ENCODE measurements at regions of chr7 and their contacts with region 1.

Region 1: DNA sequence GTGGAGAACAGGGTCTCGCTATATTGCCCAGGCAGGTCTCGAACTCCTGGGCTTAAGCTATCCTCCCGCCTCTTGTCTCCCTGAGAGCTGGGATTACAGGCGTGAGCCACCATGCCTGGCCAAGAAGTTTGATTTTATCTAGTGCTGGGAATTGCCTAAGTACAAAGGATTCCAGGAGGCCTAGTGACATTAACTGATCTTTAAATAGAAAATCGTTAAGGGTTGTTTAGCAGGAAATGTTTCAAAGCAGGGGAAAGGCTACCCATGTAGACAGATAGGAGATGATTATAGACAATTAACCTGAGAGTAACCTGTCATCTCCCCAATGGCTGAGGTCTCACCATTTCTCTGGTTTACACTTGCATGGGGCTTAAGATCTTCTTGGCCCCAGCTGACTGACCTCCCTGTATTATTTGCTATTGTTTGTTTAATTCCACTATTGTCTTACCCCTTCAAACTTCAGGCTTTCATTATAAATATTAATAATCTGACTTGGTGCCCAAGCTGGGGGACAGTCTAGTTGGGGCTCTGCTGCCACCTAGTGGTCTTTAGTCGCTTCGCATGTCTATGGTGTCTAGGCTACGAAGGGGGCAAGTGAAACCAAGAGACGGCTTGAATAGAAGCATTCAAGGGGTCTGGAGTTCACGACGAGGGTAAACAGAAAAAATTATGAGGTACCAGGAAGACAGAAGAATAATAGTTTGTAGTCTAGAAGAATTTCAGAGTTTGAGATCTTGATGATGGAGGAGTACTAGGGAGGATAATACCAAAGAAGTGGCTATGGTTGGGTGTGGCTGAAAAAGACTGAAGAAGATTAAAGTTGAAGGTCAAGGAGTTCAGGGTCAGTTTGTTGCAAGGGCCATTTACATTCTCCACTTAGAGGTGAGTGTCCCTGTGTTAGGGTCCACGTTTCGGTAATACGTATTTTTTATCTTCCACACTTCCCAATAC is 40.4 kb upstream of the BPGM start:
- DNase-seq: peak in 1 of 2 donors; percentile 62
- H3K4me3 ChIP-seq: no peak overlapping the region
- H3K27ac ChIP-seq: no peak overlapping the region
- H3K4me1 ChIP-seq: peaks cover 0 to 3% (median 0%) of the 10 kb centered on the region in 4 donors
- H3K27me3 ChIP-seq: no peaks in the 10 kb centered on the region
- CTCF ChIP-seq: peak; percentile 77 to 95

Region 2: GRCh38 chr7:134432296-134433152 is 173.7 kb before region 1 on chr7:
- intact Hi-C with region 1: loop called (anchors 5 kb)
- DNase-seq: peak; percentile 86 to 88
- H3K4me3 ChIP-seq: peak overlapping the region; percentile 34 to 50
- H3K27ac ChIP-seq: peak overlapping the region; percentile 62 to 67
- H3K4me1 ChIP-seq: peaks cover 0 to 13% (median 2%) of the 10 kb centered on the region in 4 donors
- H3K27me3 ChIP-seq: no peaks in the 10 kb centered on the region
- CTCF ChIP-seq: peak; percentile 68 to 93

Region 3: DNA sequence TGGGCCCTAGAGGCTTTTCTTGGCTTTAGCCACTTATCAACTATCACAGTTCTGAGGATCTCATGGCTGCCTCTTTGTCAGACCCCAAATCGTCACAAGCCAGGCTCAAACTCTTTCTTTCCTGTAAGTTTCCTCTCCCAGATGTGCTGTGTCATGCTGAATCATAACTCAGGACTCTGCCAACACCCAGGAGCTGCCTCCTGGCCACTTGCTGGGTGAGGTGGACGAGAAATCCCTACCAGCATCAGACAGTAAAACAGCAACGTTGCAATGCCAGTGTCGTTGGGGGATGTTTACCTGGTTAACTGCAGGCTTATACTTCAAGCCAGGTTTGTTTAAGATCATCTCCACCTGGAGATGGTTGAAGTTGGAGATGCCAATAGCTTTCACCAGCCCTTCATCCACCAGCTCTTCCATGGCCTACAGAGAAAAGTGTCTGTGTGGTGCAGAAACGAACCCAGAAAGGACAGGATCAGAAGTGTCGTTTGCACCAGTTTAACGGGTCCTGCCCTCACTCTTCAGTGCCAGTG is 157.5 kb before region 1 on chr7:
- intact Hi-C with region 1: loop called (anchors 5 kb)
- DNase-seq: no peak
- H3K4me3 ChIP-seq: no peak overlapping the region
- H3K27ac ChIP-seq: no peak overlapping the region
- H3K4me1 ChIP-seq: no peaks in the 10 kb centered on the region
- H3K27me3 ChIP-seq: no peaks in the 10 kb centered on the region
- CTCF ChIP-seq: no peak

Region 4: DNA sequence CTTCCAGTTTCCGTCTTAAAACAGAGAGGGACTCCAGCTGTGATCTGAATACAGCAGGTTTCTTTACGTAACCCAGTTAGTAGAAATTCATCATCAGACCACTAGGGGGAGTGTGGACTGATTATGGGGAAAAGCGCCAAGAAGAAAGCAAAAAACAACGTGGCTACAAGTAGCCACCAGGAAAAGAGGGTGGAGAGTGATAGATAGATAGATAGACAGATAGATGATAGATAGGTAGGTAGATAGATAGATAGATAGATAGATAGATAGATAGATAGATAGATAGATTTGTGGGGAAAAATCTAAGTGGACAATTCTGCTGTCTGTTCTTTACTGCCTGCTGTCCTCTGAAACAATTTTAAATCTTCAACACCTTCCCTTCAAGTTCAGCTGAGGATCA is 91.6 kb before region 1 on chr7:
- intact Hi-C with region 1: loop called (anchors 5 kb)
- DNase-seq: no peak
- H3K4me3 ChIP-seq: no peak overlapping the region
- H3K27ac ChIP-seq: no peak overlapping the region
- H3K4me1 ChIP-seq: peaks cover 0 to 22% (median 16%) of the 10 kb centered on the region in 4 donors
- H3K27me3 ChIP-seq: peaks cover 0 to 5% of the 10 kb centered on the region in 2 donors
- CTCF ChIP-seq: peak; percentile 82 to 85

Region 5: GRCh38 chr7:134547397-134548054 is 58.7 kb before region 1 on chr7:
- intact Hi-C with region 1: loop called (anchors 5 kb)
- DNase-seq: peak; percentile 83 to 84
- H3K4me3 ChIP-seq: peak overlapping the region; percentile 14 to 46
- H3K27ac ChIP-seq: peak overlapping the region; percentile 17 to 42
- H3K4me1 ChIP-seq: no peaks in the 10 kb centered on the region
- H3K27me3 ChIP-seq: no peaks in the 10 kb centered on the region
- CTCF ChIP-seq: peak; percentile 71 to 77

Region 6: GRCh38 chr7:134737566-134738345 is 131.5 kb after region 1 on chr7:
- intact Hi-C with region 1: no loop called
- DNase-seq: no peak
- H3K4me3 ChIP-seq: peak overlapping the region in 1 of 2 donors; percentile 2
- H3K27ac ChIP-seq: peak overlapping the region; percentile 51 to 74
- H3K4me1 ChIP-seq: peaks cover 4 to 39% (median 24%) of the 10 kb centered on the region in 4 donors
- H3K27me3 ChIP-seq: no peaks in the 10 kb centered on the region
- CTCF ChIP-seq: no peak

Measured in tibial artery (tissue), 4 donors.